K562 (cell line): ENCODE measurements at regions of chr3 and their contacts with region 1.

Region 1: DNA sequence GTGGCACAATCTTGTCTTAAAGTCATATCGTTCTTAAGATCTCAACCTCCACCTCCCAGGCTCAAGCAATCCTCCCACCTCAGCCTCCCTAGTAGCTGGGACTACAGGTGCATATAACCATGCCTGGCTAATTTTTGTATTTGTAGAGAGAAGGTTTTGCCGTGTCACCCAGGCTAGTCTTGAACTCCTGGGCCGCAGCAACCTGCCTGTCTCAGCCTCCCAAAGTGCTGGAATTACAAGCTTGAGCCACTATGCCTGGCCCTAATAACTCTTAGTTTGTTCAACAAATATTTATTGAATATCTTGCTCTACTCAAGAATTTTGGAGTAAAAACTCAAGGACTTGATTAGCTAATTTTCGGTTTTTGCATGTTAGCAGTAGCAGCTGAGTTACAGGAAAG is 19.4 kb upstream of the EDEM1 start:
- DNase-seq: no peak
- ATAC-seq: peak; percentile 66
- H3K4me3 ChIP-seq: no peak overlapping the region
- H3K27ac ChIP-seq: peak overlapping the region; percentile 9; the same call in 1 of the 3 replicates
- H3K4me1 ChIP-seq: peaks cover 0 to 17% of the 10 kb centered on the region in 2 experiments; a peak in 3 of 5 replicates
- H3K27me3 ChIP-seq: no peaks in the 10 kb centered on the region
- CTCF ChIP-seq: no peak
- EP300 ChIP-seq: no peak
- POLR2A ChIP-seq: no peak
- RAD21 ChIP-seq: no peak

Region 2: GRCh38 chr3:5151586-5151985 is 16.5 kb before region 1 on chr3:
- CTCF ChIA-PET with region 1: no interaction called
- POLR2A ChIA-PET with region 1: interaction called, 12 read pairs
- in situ Hi-C with region 1: no loop called
- intact Hi-C with region 1: no loop called
- DNase-seq: peak; percentile 55 to 73 (median 64)
- ATAC-seq: peak; percentile 85
- H3K4me3 ChIP-seq: no peak overlapping the region
- H3K27ac ChIP-seq: no peak overlapping the region; the same call in 2 of the 3 replicates
- H3K4me1 ChIP-seq: peaks cover 21 to 25% of the 10 kb centered on the region in 2 experiments
- H3K27me3 ChIP-seq: no peaks in the 10 kb centered on the region
- CTCF ChIP-seq: no peak
- EP300 ChIP-seq: no peak
- POLR2A ChIP-seq: no peak
- RAD21 ChIP-seq: no peak

Region 3: DNA sequence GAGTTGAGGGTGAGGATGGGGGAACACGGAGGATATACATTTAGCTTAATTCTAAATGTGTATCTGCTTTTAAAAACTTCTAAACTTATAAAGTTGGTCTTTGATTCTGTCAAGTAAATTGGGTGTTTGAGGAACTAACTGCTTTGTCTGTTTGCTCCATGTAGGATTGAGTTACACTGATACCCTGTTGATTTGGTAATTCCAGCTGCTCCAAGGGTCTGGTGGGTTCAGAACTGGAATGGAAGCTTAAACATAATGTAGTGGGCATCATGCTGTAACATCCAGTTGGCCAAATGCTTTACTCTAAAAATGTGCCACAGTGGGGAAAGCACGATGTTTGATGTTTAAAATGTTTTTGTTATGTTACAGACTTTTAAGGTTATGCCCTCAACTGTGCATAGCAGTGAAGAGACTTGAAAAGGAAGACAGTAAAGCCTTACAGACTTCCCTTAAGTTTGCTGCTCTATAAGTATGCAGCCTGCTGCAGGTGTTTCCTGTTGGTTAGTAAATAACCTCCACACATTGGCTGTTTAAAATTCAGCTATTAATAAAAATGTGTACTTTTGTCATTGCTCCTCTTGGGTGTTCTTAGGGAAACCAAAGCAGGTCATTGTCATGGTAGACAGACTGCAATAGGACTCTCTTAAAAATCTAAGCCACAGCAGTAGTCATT is 13.5 kb after region 1 on chr3:
- CTCF ChIA-PET with region 1: no interaction called
- POLR2A ChIA-PET with region 1: interaction called, 17 read pairs
- in situ Hi-C with region 1: no loop called
- intact Hi-C with region 1: no loop called
- DNase-seq: no peak
- ATAC-seq: no peak
- H3K4me3 ChIP-seq: no peak overlapping the region
- H3K27ac ChIP-seq: no peak overlapping the region
- H3K4me1 ChIP-seq: peaks cover 0 to 21% of the 10 kb centered on the region in 2 experiments; a peak in 3 of 5 replicates
- H3K27me3 ChIP-seq: no peaks in the 10 kb centered on the region
- CTCF ChIP-seq: no peak
- EP300 ChIP-seq: no peak
- POLR2A ChIP-seq: no peak
- RAD21 ChIP-seq: no peak